Vagina (tissue), 2 donors: ENCODE measurements at regions of chr1 and their contacts with region 1.

Region 1: GRCh38 chr1:17494114-17494729 is 45.3 kb upstream of the ARHGEF10L start:
- DNase-seq: no peak
- H3K4me3 ChIP-seq: no peak overlapping the region
- H3K27ac ChIP-seq: no peak overlapping the region
- H3K4me1 ChIP-seq: no peaks in the 10 kb centered on the region
- H3K27me3 ChIP-seq: no peaks in the 10 kb centered on the region
- CTCF ChIP-seq: peak; percentile 69 to 97 (median 83)
- POLR2A ChIP-seq: no peak

Region 2: GRCh38 chr1:17540255-17541001 is 46.2 kb after region 1 on chr1:
- intact Hi-C with region 1: no loop called
- DNase-seq: no peak
- H3K4me3 ChIP-seq: peak overlapping the region; percentile 65 to 79
- H3K27ac ChIP-seq: peak overlapping the region; percentile 89
- H3K4me1 ChIP-seq: peaks cover 50% of the 10 kb centered on the region
- H3K27me3 ChIP-seq: no peaks in the 10 kb centered on the region
- CTCF ChIP-seq: no peak
- POLR2A ChIP-seq: peak in 1 of 2 donors; percentile 8

Region 3: DNA sequence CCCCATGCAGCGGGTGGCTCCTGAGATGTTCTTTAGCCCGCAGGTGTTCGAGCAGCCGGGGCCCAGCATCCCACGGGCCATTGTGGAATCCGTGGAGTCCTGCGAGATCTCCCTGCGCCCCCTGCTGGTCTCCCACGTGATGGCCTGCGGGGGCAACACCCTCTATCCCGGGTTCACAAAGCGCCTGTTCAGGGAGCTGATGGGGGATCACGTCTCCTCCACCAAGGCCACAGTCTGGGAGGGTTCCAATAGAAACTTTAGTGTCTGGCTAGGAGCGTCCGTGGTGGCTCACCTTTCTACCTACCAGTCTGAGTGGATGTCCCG is 331.9 kb after region 1 on chr1:
- intact Hi-C with region 1: loop called (anchors 10 kb)
- DNase-seq: peak in 1 of 2 donors; percentile 87
- H3K4me3 ChIP-seq: no peak overlapping the region
- H3K27ac ChIP-seq: no peak overlapping the region
- H3K4me1 ChIP-seq: no peaks in the 10 kb centered on the region
- H3K27me3 ChIP-seq: no peaks in the 10 kb centered on the region
- CTCF ChIP-seq: no peak
- POLR2A ChIP-seq: no peak

Region 4: GRCh38 chr1:18511149-18511873 is 1017.1 kb after region 1 on chr1:
- intact Hi-C with region 1: loop called (anchors 5 kb)
- DNase-seq: peak in 1 of 2 donors; percentile 54
- H3K4me3 ChIP-seq: no peak overlapping the region
- H3K27ac ChIP-seq: no peak overlapping the region
- H3K4me1 ChIP-seq: no peaks in the 10 kb centered on the region
- H3K27me3 ChIP-seq: no peaks in the 10 kb centered on the region
- CTCF ChIP-seq: no peak
- POLR2A ChIP-seq: no peak